H1 (cell line): ENCODE measurements at regions of chr2 and their contacts with region 1.

Region 1: DNA sequence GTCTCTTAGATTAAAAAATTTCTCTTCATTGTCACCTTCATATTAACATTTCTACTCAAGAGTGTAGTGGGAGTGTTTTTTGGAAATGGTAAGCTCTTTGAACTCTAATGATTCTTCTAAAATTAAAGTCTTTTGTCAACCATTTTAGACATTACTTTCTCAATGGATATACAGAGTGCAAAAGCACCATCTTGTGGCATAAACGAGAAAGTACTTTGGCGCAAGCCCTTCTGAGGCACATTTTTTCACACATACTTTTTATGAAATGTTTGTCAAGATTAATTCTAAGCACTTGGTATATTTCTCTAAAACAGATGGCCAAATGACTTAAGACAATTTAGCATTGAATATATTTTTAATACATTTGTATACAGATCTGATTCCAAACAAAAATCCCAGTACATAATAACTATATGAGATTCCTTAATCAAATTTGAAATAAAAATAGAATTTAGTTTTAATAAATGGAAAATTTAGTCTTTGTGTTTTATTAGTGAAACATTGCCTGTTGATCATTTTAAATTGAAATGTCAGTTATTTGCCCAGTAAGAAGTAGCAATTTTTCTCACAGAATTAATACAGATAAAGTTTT is 63.3 kb upstream of the GALNT5 start:
- DNase-seq: no peak
- H3K4me3 ChIP-seq: no peak overlapping the region
- H3K27ac ChIP-seq: no peak overlapping the region
- H3K4me1 ChIP-seq: no peaks in the 10 kb centered on the region
- H3K27me3 ChIP-seq: no peaks in the 10 kb centered on the region
- CTCF ChIP-seq: peak in 2 of 3 experiments; percentile 50 to 55; a peak in 2 of 4 replicates
- EP300 ChIP-seq: no peak
- POLR2A ChIP-seq: no peak
- RAD21 ChIP-seq: peak; percentile 84 to 86

Region 2: GRCh38 chr2:157046396-157046795 is 147.8 kb before region 1 on chr2:
- CTCF ChIA-PET with region 1: no interaction called
- POLR2A ChIA-PET with region 1: no interaction called
- DNase-seq: no peak
- H3K4me3 ChIP-seq: no peak overlapping the region
- H3K27ac ChIP-seq: no peak overlapping the region
- H3K4me1 ChIP-seq: no peaks in the 10 kb centered on the region
- H3K27me3 ChIP-seq: no peaks in the 10 kb centered on the region
- CTCF ChIP-seq: no peak
- EP300 ChIP-seq: no peak
- POLR2A ChIP-seq: no peak
- RAD21 ChIP-seq: no peak

Region 3: DNA sequence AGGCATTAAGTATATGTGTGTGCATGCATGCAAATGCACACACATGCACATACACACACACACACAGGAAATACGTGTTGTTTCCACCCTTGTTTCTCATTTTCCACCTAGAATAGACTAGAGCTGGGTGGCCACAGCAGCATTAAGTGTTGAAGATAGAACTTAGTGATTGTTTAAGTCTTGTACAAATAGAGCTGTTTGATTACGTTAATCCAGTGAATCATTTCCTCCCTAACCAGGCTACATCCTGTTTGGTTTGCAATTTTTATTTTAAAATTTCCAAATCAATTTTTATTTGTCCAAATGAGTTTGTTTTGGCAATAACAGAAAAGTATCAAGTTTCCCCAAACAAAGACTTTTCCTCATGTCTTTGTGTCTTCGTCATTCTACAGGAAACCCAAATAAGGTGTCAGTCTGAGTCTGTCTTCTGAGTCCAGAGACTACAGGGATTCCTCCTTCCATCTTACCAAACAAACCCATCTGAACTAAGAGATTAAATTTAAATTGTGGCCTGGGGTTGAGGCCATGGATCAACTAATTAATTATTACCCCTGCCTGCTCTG is 11.3 kb before region 1 on chr2:
- CTCF ChIA-PET with region 1: interaction called, 20 read pairs
- POLR2A ChIA-PET with region 1: no interaction called
- DNase-seq: no peak
- H3K4me3 ChIP-seq: no peak overlapping the region
- H3K27ac ChIP-seq: no peak overlapping the region
- H3K4me1 ChIP-seq: no peaks in the 10 kb centered on the region
- H3K27me3 ChIP-seq: no peaks in the 10 kb centered on the region
- CTCF ChIP-seq: no peak
- EP300 ChIP-seq: no peak
- POLR2A ChIP-seq: no peak
- RAD21 ChIP-seq: no peak